Naive thymus-derived CD4-positive, alpha-beta T cell (primary cell): ENCODE measurements at regions of chr12 and their contacts with region 1.

Region 1: DNA sequence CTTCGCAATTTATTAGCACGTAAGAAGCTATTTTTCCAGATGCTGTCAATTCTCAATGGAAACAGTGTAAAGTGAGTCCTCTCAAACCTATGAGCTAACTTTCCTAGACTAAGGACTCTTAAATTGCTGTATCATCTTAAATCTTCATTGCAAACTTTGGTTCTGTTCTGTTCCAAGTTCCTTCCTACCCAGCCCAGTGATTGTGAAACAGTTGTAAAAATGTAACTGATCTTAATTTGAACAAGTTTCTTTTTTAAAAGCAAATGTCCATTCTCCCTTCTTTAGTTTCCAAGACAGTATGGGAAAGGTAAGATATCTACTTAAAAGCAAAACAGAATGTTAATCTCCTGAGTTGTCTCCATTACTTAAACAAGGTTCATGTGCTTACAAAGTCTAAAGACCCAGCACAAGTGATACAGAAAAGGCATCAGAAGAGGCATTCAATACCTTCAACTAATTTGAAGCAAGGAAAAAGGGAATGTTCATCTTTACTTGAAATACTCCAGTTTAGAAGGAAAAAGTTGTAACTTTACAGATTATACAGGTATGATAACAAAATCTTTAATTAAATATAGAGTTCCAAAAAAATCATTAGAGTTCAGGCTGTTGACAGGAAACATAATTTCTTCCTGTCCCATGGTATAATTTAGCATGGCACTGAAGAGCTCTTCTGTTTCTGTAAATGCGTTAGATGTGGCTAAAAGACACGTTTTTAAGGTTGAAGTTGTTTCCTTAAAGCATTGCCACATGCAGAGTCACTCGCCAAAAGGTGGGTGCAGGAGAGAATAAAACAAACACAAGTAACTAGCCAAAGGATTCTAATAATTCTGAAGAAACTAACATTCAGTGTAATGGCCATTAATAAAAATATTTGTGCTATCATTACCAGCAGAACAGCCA is 101.5 kb upstream of the USP15 start:
- DNase-seq: peak in 7 of 9 donors; percentile 16 to 75 (median 58)
- ATAC-seq: peak; percentile 57
- H3K4me3 ChIP-seq: no peak overlapping the region
- H3K4me3 Mint-ChIP-seq: peak overlapping the region in 9 of 10 donors; percentile 48 to 84 (median 69)
- H3K27ac ChIP-seq: no peak overlapping the region
- H3K27ac Mint-ChIP-seq: peak overlapping the region in 8 of 9 donors; percentile 57 to 96 (median 78)
- H3K4me1 ChIP-seq: peaks cover 0 to 31% of the 10 kb centered on the region in 2 donors
- H3K4me1 Mint-ChIP-seq: peaks cover 3 to 66% (median 57%) of the 10 kb centered on the region in 7 donors
- H3K27me3 ChIP-seq: no peaks in the 10 kb centered on the region
- H3K27me3 Mint-ChIP-seq: peaks cover 0 to 8% (median 0%) of the 10 kb centered on the region in 5 donors

Region 2: GRCh38 chr12:62123721-62124203 is 34.9 kb before region 1 on chr12:
- CTCF ChIA-PET with region 1: no interaction called
- POLR2A ChIA-PET with region 1: no interaction called
- intact Hi-C with region 1: loop called in 1 of 2 experiments (anchors 2 kb)
- DNase-seq: peak in 7 of 9 donors; percentile 8 to 49 (median 30)
- ATAC-seq: peak; percentile 77
- H3K4me3 ChIP-seq: no peak overlapping the region
- H3K4me3 Mint-ChIP-seq: no peak overlapping the region
- H3K27ac ChIP-seq: no peak overlapping the region
- H3K27ac Mint-ChIP-seq: peak overlapping the region in 1 of 9 donors; percentile 27
- H3K4me1 ChIP-seq: no peaks in the 10 kb centered on the region
- H3K4me1 Mint-ChIP-seq: peaks cover 0 to 6% (median 0%) of the 10 kb centered on the region in 7 donors
- H3K27me3 ChIP-seq: no peaks in the 10 kb centered on the region
- H3K27me3 Mint-ChIP-seq: peaks cover 0 to 17% (median 4%) of the 10 kb centered on the region in 5 donors

Region 3: DNA sequence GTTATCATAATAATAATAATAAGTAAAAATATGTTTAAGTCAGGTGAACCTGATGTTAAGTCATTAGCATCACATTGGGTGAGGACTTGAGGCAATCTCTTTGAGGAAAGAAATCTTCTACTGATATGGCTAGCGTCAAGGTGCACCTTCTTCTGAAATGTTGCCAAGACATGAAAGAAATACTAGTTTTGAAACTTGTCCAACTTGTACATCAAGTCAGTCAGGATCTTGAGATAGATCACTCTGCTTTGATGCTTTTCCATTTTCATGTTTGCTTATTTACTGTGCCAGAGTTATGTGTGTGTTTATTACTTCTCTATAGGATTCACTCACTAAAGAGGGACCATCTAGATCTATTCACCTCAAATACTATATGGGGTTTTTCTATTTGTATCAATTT is 11.5 kb after region 1 on chr12:
- CTCF ChIA-PET with region 1: no interaction called
- POLR2A ChIA-PET with region 1: no interaction called
- intact Hi-C with region 1: loop called in 1 of 2 experiments (anchors 2 kb)
- DNase-seq: no peak
- ATAC-seq: no peak
- H3K4me3 ChIP-seq: no peak overlapping the region
- H3K4me3 Mint-ChIP-seq: no peak overlapping the region
- H3K27ac ChIP-seq: no peak overlapping the region
- H3K27ac Mint-ChIP-seq: no peak overlapping the region
- H3K4me1 ChIP-seq: no peaks in the 10 kb centered on the region
- H3K4me1 Mint-ChIP-seq: peaks cover 0 to 5% (median 0%) of the 10 kb centered on the region in 7 donors
- H3K27me3 ChIP-seq: no peaks in the 10 kb centered on the region
- H3K27me3 Mint-ChIP-seq: peaks cover 0 to 9% (median 5%) of the 10 kb centered on the region in 5 donors